Ascending aorta (tissue), 2 donors: ENCODE measurements at regions of chr12 and their contacts with region 1.

Region 1: GRCh38 chr12:121626087-121626852 is at the start of gene ORAI1:
- DNase-seq: peak; percentile 80 to 98
- H3K4me3 ChIP-seq: peak within 1 kb of the TSS; percentile 77 to 81
- H3K27ac ChIP-seq: peak within 1 kb of the TSS; percentile 82 to 88
- H3K4me1 ChIP-seq: peaks cover 0 to 14% of the 10 kb centered on the region in 2 donors
- H3K27me3 ChIP-seq: no peaks in the 10 kb centered on the region
- CTCF ChIP-seq: peak in 1 of 3 experiments; percentile 72
- total RNA-seq, gene ORAI1: 24.6 TPM

Region 2: GRCh38 chr12:121467115-121467793 is 159.0 kb before region 1 on chr12:
- intact Hi-C with region 1: loop called (anchors 1 kb)
- DNase-seq: peak; percentile 73 to 94
- H3K4me3 ChIP-seq: peak overlapping the region; percentile 84 to 97
- H3K27ac ChIP-seq: peak overlapping the region; percentile 69 to 92
- H3K4me1 ChIP-seq: peaks cover 0 to 5% of the 10 kb centered on the region in 2 donors
- H3K27me3 ChIP-seq: no peaks in the 10 kb centered on the region
- CTCF ChIP-seq: no peak

Region 3: GRCh38 chr12:121536899-121537813 is 89.1 kb before region 1 on chr12:
- intact Hi-C with region 1: loop called (anchors 2 kb)
- DNase-seq: peak; percentile 57 to 89
- H3K4me3 ChIP-seq: peak overlapping the region; percentile 72 to 82
- H3K27ac ChIP-seq: peak overlapping the region; percentile 77 to 85
- H3K4me1 ChIP-seq: peaks cover 8 to 12% of the 10 kb centered on the region in 2 donors
- H3K27me3 ChIP-seq: no peaks in the 10 kb centered on the region
- CTCF ChIP-seq: no peak

Region 4: DNA sequence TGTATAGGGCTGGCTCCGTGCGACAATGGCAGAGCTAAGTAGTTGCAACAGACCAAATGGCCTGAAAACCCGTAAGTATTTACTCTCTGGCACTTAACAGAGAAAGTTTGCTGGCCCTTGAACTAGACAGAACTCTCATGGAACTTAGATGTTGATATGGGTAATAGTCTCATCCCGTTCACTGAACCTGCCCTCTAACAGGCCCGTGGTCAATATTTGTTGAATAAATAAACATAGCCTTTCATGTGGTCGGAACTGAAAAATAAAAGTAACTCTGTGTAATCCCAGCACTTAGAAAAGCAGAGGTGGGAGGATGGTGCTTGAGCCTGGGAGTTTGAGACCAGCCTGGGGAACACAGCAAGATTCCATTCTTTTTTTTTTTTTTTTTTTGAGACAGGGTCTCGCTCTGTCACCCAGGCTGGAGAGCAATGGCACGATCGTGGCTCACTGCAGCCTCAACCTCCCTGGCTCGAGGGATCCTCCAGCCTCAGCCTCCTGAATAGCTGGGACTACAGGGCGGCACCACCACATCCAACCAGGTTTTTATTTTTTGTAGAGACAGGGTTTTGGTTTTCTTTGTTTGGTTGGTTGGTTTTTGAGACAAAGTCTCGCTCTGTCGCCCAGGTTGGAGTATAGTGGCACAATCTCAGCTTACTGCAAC is 75.2 kb before region 1 on chr12:
- intact Hi-C with region 1: loop called (anchors 1 kb)
- DNase-seq: no peak
- H3K4me3 ChIP-seq: no peak overlapping the region
- H3K27ac ChIP-seq: no peak overlapping the region
- H3K4me1 ChIP-seq: no peaks in the 10 kb centered on the region
- H3K27me3 ChIP-seq: no peaks in the 10 kb centered on the region
- CTCF ChIP-seq: no peak

Region 5: GRCh38 chr12:121579981-121580868 is 46.0 kb before region 1 on chr12:
- intact Hi-C with region 1: loop called (anchors 2 kb)
- DNase-seq: peak in 1 of 2 donors; percentile 85
- H3K4me3 ChIP-seq: peak overlapping the region; percentile 77 to 92
- H3K27ac ChIP-seq: peak overlapping the region; percentile 88
- H3K4me1 ChIP-seq: peaks cover 7 to 41% of the 10 kb centered on the region in 2 donors
- H3K27me3 ChIP-seq: no peaks in the 10 kb centered on the region
- CTCF ChIP-seq: no peak

Region 6: DNA sequence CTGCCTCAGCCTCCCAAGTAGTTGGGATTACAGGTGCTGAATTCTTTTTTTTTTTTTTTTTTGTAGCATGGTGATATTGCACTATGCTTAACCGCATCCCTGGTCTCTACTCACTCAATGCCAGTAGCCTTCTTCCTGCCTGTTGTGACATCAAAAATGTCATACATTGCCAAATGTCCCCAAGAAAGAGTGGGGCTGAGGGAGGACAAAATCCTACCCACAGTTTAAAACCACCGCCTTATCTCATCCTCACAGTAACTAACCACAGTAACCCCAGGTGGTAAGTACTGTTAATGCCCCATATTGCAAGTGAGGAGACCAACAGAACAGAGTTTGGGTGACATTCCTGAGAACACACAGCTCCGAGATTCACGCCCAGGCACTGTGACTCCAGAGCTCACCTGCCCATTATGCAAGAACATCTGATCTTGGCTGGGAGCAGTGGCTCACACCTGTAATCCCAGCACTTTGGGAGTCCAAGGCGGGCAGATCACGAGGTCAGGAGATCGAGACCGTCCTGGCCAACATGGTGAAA is 23.6 kb after region 1 on chr12:
- intact Hi-C with region 1: no loop called
- DNase-seq: no peak
- H3K4me3 ChIP-seq: no peak overlapping the region
- H3K27ac ChIP-seq: no peak overlapping the region
- H3K4me1 ChIP-seq: no peaks in the 10 kb centered on the region
- H3K27me3 ChIP-seq: no peaks in the 10 kb centered on the region
- CTCF ChIP-seq: no peak

Region 7: DNA sequence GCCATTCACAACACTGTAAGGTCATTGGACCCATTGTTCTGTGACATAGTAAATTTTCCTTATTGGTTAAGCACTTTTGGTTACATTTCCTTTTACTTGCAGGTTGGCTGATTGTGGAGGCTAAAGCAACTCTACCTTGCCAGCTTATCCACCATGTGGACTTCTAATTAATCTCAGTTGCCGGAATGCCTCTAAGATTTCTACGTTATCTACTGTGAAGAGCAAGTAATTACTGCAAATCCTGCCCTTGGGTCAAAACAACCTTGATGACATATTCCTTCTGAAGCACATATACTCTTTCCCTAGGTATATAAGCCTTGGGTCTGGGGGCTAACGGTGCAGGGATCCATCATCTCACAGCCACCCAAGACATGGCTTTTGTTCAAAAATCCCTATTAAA is 62.7 kb after region 1 on chr12:
- intact Hi-C with region 1: loop called (anchors 1 kb)
- DNase-seq: no peak
- H3K4me3 ChIP-seq: no peak overlapping the region
- H3K27ac ChIP-seq: no peak overlapping the region
- H3K4me1 ChIP-seq: peaks cover 0 to 7% of the 10 kb centered on the region in 2 donors
- H3K27me3 ChIP-seq: no peaks in the 10 kb centered on the region
- CTCF ChIP-seq: no peak

Region 8: GRCh38 chr12:121802846-121803630 is 176.8 kb after region 1 on chr12:
- intact Hi-C with region 1: loop called (anchors 5 kb)
- DNase-seq: peak; percentile 71 to 94
- H3K4me3 ChIP-seq: peak overlapping the region; percentile 94 to 98
- H3K27ac ChIP-seq: peak overlapping the region; percentile 100
- H3K4me1 ChIP-seq: peaks cover 6 to 31% of the 10 kb centered on the region in 2 donors
- H3K27me3 ChIP-seq: no peaks in the 10 kb centered on the region
- CTCF ChIP-seq: no peak